Ascending aorta (tissue), 2 donors: ENCODE measurements at regions of chr13 and their contacts with region 1.

Region 1: GRCh38 chr13:74287724-74288169 is 153.5 kb upstream of the KLF12 start:
- DNase-seq: peak; percentile 47 to 85
- H3K4me3 ChIP-seq: peak overlapping the region; percentile 18 to 53
- H3K27ac ChIP-seq: peak overlapping the region in 1 of 2 donors; percentile 2
- H3K4me1 ChIP-seq: peaks cover 4 to 8% of the 10 kb centered on the region in 2 donors
- H3K27me3 ChIP-seq: no peaks in the 10 kb centered on the region
- CTCF ChIP-seq: no peak

Region 2: GRCh38 chr13:73754727-73755292 is 532.9 kb before region 1 on chr13:
- intact Hi-C with region 1: loop called (anchors 5 kb)
- DNase-seq: no peak
- H3K4me3 ChIP-seq: no peak overlapping the region
- H3K27ac ChIP-seq: no peak overlapping the region
- H3K4me1 ChIP-seq: no peaks in the 10 kb centered on the region
- H3K27me3 ChIP-seq: no peaks in the 10 kb centered on the region
- CTCF ChIP-seq: peak; percentile 25 to 71 (median 58)

Region 3: DNA sequence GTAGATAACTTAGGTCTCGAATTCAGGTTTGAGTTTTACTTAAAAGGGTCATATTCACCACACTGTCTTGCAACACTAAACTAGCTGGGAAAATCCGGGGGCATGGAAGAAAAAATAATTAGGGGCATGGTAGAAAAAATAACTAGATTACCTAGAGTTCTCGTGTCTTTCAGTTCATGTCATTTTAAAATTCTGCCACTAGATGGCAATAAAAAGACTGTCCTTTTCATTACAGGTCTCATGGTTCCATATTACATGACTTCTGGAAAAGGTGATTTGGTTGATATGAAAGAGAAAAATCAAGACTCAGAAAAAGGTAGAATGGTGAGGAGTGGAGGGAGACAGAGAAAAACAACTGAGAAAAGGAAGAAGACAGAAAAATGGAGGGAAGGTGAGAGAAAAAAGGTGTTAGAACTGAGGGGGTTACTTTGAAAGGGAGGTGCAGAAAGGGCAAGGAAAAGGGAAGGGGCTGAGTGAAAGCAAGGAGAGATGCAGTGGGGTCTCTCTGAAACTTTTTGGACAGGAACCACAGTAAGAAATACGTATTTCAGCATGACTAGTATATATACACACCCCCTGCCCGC is 452.5 kb before region 1 on chr13:
- intact Hi-C with region 1: loop called (anchors 2 kb)
- DNase-seq: no peak
- H3K4me3 ChIP-seq: no peak overlapping the region
- H3K27ac ChIP-seq: no peak overlapping the region
- H3K4me1 ChIP-seq: no peaks in the 10 kb centered on the region
- H3K27me3 ChIP-seq: no peaks in the 10 kb centered on the region
- CTCF ChIP-seq: peak; percentile 53 to 70 (median 53)

Region 4: DNA sequence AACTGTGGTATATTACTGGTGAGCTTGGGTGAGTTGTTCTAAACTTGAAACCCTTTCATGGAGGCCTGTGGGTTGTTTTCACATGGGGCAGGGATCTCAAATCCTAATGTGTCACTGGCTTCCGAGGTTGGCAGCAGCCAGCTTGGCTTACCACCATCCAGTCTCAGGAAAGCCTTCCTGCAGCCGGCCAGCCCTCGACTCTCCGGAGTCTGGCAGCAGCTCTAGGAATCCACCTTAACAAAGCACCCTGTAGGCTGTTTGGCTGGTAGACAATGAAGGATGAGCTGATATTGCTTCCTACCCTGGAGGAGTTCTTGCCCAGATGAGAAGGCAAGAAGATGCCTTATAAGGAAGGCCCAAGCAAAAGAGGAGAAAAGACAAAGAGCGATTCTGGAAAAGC is 341.9 kb before region 1 on chr13:
- intact Hi-C with region 1: loop called (anchors 2 kb)
- DNase-seq: peak in 1 of 2 donors; percentile 64
- H3K4me3 ChIP-seq: no peak overlapping the region
- H3K27ac ChIP-seq: no peak overlapping the region
- H3K4me1 ChIP-seq: no peaks in the 10 kb centered on the region
- H3K27me3 ChIP-seq: no peaks in the 10 kb centered on the region
- CTCF ChIP-seq: no peak

Region 5: GRCh38 chr13:74062933-74063332 is 224.8 kb before region 1 on chr13:
- intact Hi-C with region 1: loop called (anchors 5 kb)
- DNase-seq: peak; percentile 21 to 90
- H3K4me3 ChIP-seq: peak overlapping the region; percentile 38 to 49
- H3K27ac ChIP-seq: peak overlapping the region; percentile 74 to 83
- H3K4me1 ChIP-seq: peaks cover 4 to 35% of the 10 kb centered on the region in 2 donors
- H3K27me3 ChIP-seq: no peaks in the 10 kb centered on the region
- CTCF ChIP-seq: no peak

Region 6: DNA sequence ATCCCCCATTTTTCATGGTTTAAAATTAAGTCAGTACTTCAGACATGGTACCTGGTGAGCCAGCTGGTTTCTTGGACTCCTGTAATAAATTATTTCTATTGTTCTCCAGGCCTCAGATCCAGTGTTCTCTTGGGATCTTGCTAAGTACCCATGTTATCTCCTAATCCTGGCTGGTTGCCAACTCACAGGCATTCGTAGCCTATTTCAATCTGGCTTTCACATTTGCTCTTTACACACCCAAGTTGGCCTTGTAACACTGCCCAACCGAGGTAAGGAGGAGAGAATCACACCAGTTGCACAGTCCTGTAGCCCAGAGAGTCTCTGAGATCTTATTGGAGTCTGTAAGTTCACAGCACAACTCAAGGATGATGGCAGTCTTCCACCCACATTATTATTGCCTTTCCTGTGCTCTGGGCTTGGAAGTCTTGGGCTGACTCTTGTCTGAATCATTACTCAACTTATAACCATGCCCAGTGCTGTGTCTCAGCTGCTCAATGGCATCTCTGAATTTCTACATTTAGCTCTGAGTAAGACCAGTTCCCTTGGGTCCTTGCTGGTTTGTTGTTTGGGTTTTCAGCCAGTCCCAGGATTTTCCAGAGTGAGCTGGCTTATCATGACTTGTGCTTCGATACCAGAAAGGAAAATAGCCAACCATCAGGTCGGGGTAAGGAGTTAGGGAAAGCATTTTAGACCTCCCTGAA is 76.9 kb before region 1 on chr13:
- intact Hi-C with region 1: loop called (anchors 5 kb)
- DNase-seq: peak; percentile 30 to 89
- H3K4me3 ChIP-seq: peak overlapping the region in 1 of 2 donors; percentile 7
- H3K27ac ChIP-seq: peak overlapping the region; percentile 69 to 87
- H3K4me1 ChIP-seq: peaks cover 0 to 9% of the 10 kb centered on the region in 2 donors
- H3K27me3 ChIP-seq: no peaks in the 10 kb centered on the region
- CTCF ChIP-seq: no peak